ENCODE measurements at regions of chr9 and their contacts with region 1.

Region 1: GRCh38 chr9:92115071-92115858 is at the start of gene SPTLC1:
- DNase-seq: peak; percentile 91 to 96 (median 94)
- H3K4me3 ChIP-seq: peak within 1 kb of the TSS; percentile 68 to 95 (median 84)
- H3K27ac ChIP-seq: peak within 1 kb of the TSS; percentile 46 to 97 (median 89)
- H3K27me3 ChIP-seq: no peaks in the 10 kb centered on the region
- CTCF ChIP-seq: peak in 34 of 56 donors; percentile 6 to 54 (median 26)
- total RNA-seq, gene SPTLC1: 39.1 to 77.8 (median 58.2) TPM

Region 2: DNA sequence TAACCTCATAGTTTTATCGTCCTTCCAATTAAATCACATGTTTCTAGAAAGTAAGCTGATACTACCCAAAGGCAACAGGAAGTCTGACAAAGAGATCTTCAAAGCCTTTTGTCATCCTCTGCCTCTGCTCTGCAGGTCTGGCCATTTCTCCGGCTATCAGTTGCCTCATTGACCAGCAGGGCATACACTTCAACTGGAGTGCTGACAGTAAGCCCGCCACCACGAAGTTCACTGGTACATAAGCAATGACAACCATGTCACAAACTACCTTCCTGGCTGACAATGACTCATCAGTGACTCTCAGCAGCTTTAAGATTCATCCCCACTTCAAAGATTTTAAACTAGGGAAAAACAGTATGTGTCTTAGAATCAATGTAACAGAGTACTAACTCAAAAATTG is 20.6 kb before region 1 on chr9:
- intact Hi-C with region 1: loop called in 1 of 2 experiments (anchors 2 kb)
- DNase-seq: no peak
- H3K4me3 ChIP-seq: no peak overlapping the region
- H3K27ac ChIP-seq: no peak overlapping the region
- H3K27me3 ChIP-seq: no peaks in the 10 kb centered on the region
- CTCF ChIP-seq: no peak

Region 3: GRCh38 chr9:92547356-92547755 is 432.1 kb after region 1 on chr9:
- intact Hi-C with region 1: no loop called
- DNase-seq: no peak
- H3K4me3 ChIP-seq: no peak overlapping the region
- H3K27ac ChIP-seq: no peak overlapping the region
- H3K27me3 ChIP-seq: no peaks in the 10 kb centered on the region
- CTCF ChIP-seq: no peak

Region 4: GRCh38 chr9:92764988-92765936 is 650.0 kb after region 1 on chr9:
- intact Hi-C with region 1: loop called in 1 of 2 experiments (anchors 10 kb)
- DNase-seq: peak; percentile 97 to 100 (median 99)
- H3K4me3 ChIP-seq: peak overlapping the region; percentile 45 to 99 (median 91)
- H3K27ac ChIP-seq: peak overlapping the region; percentile 81 to 100 (median 98)
- H3K27me3 ChIP-seq: no peaks in the 10 kb centered on the region
- CTCF ChIP-seq: peak; percentile 77 to 99 (median 93)

Measured in dorsolateral prefrontal cortex (tissue), 120 donors.